IMR-90 (cell line): ENCODE measurements at regions of chr5 and their contacts with region 1.

Region 1: GRCh38 chr5:33180900-33181299 is 259.9 kb upstream of the TARS1 start:
- DNase-seq: peak; percentile 70
- ATAC-seq: peak; percentile 78
- H3K4me3 ChIP-seq: no peak overlapping the region
- H3K27ac ChIP-seq: no peak overlapping the region
- H3K4me1 ChIP-seq: no peaks in the 10 kb centered on the region
- H3K27me3 ChIP-seq: no peaks in the 10 kb centered on the region
- CTCF ChIP-seq: peak; percentile 80
- POLR2A ChIP-seq: no peak
- RAD21 ChIP-seq: peak; percentile 83

Region 2: GRCh38 chr5:32613050-32613672 is 567.7 kb before region 1 on chr5:
- CTCF ChIA-PET with region 1: no interaction called
- POLR2A ChIA-PET with region 1: no interaction called
- dilution Hi-C with region 1: no loop called
- in situ Hi-C with region 1: no loop called
- intact Hi-C with region 1: loop called (anchors 5 kb)
- DNase-seq: peak; percentile 75
- ATAC-seq: peak; percentile 87
- H3K4me3 ChIP-seq: no peak overlapping the region
- H3K27ac ChIP-seq: no peak overlapping the region
- H3K4me1 ChIP-seq: peaks cover 3% of the 10 kb centered on the region
- H3K27me3 ChIP-seq: no peaks in the 10 kb centered on the region
- CTCF ChIP-seq: peak; percentile 91
- POLR2A ChIP-seq: 0 out of 2 replicates have a peak, but pooled peaks have one; percentile 29
- RAD21 ChIP-seq: peak; percentile 93

Region 3: GRCh38 chr5:32916648-32917047 is 264.3 kb before region 1 on chr5:
- CTCF ChIA-PET with region 1: interaction called, 3 read pairs
- POLR2A ChIA-PET with region 1: no interaction called
- dilution Hi-C with region 1: no loop called
- in situ Hi-C with region 1: no loop called
- intact Hi-C with region 1: loop called (anchors 5 kb)
- DNase-seq: peak; percentile 52
- ATAC-seq: peak; percentile 79
- H3K4me3 ChIP-seq: no peak overlapping the region
- H3K27ac ChIP-seq: no peak overlapping the region
- H3K4me1 ChIP-seq: peaks cover 2% of the 10 kb centered on the region; the same call in 1 of the 2 replicates
- H3K27me3 ChIP-seq: no peaks in the 10 kb centered on the region
- CTCF ChIP-seq: peak; percentile 68
- POLR2A ChIP-seq: no peak
- RAD21 ChIP-seq: peak; percentile 82

Region 4: DNA sequence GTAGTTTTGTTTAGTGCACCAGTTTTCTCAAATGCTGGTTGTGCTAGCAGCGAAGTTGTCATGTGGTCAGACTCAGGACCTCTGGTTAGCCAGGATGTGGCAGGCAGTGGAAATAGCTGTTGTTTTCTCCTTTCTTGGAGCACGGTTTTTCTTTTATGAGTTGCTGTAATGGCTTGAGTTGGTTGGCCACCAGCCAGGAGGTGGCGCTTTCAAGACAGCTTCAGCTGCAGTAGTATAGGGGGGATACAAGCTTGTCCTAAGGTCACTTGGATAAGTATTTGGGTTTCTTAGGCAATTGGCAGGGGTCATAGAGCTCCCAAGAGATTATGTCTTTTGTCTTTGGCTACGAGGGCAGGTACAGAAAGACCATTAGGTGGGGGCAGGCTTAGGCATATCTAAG is 14.4 kb before region 1 on chr5:
- CTCF ChIA-PET with region 1: no interaction called
- POLR2A ChIA-PET with region 1: no interaction called
- dilution Hi-C with region 1: no loop called
- in situ Hi-C with region 1: no loop called
- intact Hi-C with region 1: no loop called
- DNase-seq: no peak
- ATAC-seq: no peak
- H3K4me3 ChIP-seq: no peak overlapping the region
- H3K27ac ChIP-seq: no peak overlapping the region
- H3K4me1 ChIP-seq: no peaks in the 10 kb centered on the region
- H3K27me3 ChIP-seq: no peaks in the 10 kb centered on the region
- CTCF ChIP-seq: no peak
- POLR2A ChIP-seq: no peak
- RAD21 ChIP-seq: no peak

Region 5: DNA sequence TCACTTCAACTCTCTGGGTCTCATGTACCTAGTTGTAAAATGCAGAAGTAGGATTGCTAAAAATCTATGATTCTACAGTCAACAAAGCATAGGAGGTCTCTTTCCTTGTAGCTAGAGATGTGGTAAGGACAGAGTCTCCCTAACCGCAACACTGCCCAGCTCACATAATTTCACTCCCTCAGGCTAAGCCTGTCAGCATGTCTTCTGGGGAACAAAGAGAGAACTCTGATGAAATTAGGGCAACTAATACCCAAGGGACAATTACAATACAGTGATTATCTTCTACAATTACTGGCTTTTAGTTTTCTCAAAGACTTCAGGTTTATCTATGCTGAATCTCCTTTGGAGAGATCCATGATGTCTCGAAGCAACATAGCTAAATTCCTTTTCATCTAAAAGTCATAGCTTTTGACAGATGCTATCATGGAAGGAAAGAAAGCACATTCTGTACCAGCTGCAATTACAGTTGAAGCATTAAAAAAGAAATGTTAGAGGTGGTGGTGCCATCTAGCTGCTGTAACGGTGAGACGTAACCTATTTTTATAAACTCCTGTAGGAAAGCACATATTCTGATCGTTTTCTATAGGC is 118.8 kb after region 1 on chr5:
- CTCF ChIA-PET with region 1: interaction called, 4 read pairs
- POLR2A ChIA-PET with region 1: no interaction called
- dilution Hi-C with region 1: no loop called
- in situ Hi-C with region 1: no loop called
- intact Hi-C with region 1: loop called (anchors 2 kb)
- DNase-seq: peak; percentile 71
- ATAC-seq: peak; percentile 86
- H3K4me3 ChIP-seq: no peak overlapping the region
- H3K27ac ChIP-seq: peak overlapping the region; percentile 2; the same call in 1 of the 2 replicates
- H3K4me1 ChIP-seq: peaks cover 3% of the 10 kb centered on the region; the same call in 1 of the 2 replicates
- H3K27me3 ChIP-seq: no peaks in the 10 kb centered on the region
- CTCF ChIP-seq: peak; percentile 56
- POLR2A ChIP-seq: no peak
- RAD21 ChIP-seq: peak; percentile 67

Region 6: DNA sequence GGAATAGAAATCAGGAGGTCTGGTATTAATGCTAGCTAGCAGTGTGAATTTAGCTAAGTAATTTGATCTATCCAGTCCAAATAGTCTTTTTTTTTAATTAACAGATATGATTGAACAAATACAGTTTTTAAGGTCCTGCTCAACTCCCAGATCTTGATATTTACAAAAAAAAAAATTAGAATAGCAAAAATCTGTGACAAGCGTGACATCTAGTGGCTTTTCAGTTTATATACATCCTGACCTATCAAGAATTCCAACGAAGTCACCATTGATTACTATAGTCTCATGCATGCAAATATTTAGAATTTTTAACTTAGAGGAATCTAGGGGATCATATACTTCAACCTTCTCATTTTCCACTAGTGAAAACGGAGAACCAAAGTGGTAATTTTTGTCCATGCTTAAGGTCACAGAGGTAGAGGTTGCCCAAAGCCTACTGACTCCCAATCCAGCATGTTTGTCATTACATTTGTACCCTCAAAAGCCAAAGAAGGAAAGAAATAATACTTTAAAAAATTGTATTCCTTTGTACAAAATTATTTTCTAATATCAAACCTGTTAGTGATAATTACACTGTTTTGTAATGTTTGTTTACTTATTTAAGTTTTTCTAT is 242.2 kb after region 1 on chr5:
- CTCF ChIA-PET with region 1: interaction called, 3 read pairs
- POLR2A ChIA-PET with region 1: no interaction called
- dilution Hi-C with region 1: no loop called
- in situ Hi-C with region 1: loop called (anchors 25 kb)
- intact Hi-C with region 1: loop called (anchors 2 kb)
- DNase-seq: peak; percentile 73
- ATAC-seq: peak; percentile 79
- H3K4me3 ChIP-seq: no peak overlapping the region
- H3K27ac ChIP-seq: no peak overlapping the region
- H3K4me1 ChIP-seq: no peaks in the 10 kb centered on the region; the same call in 1 of the 2 replicates
- H3K27me3 ChIP-seq: no peaks in the 10 kb centered on the region
- CTCF ChIP-seq: peak; percentile 66
- POLR2A ChIP-seq: no peak
- RAD21 ChIP-seq: peak; percentile 71